ENCODE measurements at regions of chr3 and their contacts with region 1.

Region 1: DNA sequence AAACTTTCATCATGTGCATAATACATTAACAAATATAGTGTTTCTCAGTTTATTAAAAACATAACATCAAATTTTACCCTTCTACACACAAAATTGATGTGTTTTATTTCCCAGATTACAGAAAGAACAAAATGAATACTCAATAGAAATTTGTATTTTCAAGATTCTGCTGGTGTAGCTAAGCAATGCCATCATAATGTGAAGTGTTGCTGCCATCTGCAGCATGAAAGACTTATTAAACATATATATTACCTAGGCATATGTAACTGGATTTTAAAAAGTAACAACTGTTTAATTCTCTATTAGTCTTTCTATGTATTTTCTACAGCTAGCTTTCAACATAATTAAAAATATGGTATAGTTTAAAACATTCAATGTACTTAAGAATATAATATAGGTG is 27.5 kb downstream of the PLSCR5 start:
- DNase-seq: peak; percentile 40
- H3K4me3 ChIP-seq: no peak overlapping the region
- H3K27ac ChIP-seq: no peak overlapping the region
- H3K4me1 ChIP-seq: peaks cover 23% of the 10 kb centered on the region
- H3K27me3 ChIP-seq: no peaks in the 10 kb centered on the region
- CTCF ChIP-seq: peak; percentile 27 to 51

Region 2: DNA sequence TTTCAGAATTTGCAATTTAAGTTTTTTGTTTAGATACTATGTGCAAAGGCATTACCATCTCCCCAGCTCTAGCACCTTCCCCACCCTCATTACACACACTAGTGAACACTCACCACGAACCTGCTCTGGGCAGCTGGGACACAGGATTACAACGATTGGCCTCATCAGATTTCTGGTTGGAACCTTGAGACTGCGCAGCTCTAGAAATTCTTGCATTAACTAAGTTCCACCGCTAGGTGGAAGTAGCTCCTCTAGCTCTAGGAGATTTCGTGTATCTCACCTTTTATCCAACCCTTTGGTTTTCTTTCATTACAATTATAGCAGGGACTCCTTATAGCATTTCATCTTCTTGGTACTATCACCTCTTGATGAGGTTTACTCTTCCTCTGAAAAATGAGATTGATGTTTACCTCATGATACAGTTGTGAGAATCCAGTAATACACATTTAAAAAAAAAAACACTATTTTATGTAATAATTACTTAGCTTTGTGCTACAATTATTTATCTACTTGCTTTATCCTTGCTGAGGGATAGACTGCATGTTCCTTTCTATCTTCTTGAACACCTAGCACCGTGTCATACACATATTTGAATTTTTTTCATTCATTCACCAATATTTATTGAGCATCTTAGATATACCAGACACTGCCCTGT is 388.0 kb before region 1 on chr3:
- CTCF ChIA-PET with region 1: no interaction called
- dilution Hi-C with region 1: no loop called
- in situ Hi-C with region 1: no loop called
- intact Hi-C with region 1: loop called (anchors 1 kb)
- DNase-seq: peak; percentile 54
- H3K4me3 ChIP-seq: no peak overlapping the region
- H3K27ac ChIP-seq: no peak overlapping the region
- H3K4me1 ChIP-seq: peaks cover 3% of the 10 kb centered on the region
- H3K27me3 ChIP-seq: no peaks in the 10 kb centered on the region
- CTCF ChIP-seq: peak; percentile 78 to 80

Region 3: GRCh38 chr3:146326670-146327543 is 250.8 kb before region 1 on chr3:
- CTCF ChIA-PET with region 1: interaction called, 8 read pairs
- dilution Hi-C with region 1: no loop called
- in situ Hi-C with region 1: loop called (anchors 10 kb)
- intact Hi-C with region 1: loop called (anchors 2 kb)
- DNase-seq: peak; percentile 51
- H3K4me3 ChIP-seq: no peak overlapping the region
- H3K27ac ChIP-seq: no peak overlapping the region
- H3K4me1 ChIP-seq: no peaks in the 10 kb centered on the region
- H3K27me3 ChIP-seq: no peaks in the 10 kb centered on the region
- CTCF ChIP-seq: peak; percentile 46 to 58

Region 4: DNA sequence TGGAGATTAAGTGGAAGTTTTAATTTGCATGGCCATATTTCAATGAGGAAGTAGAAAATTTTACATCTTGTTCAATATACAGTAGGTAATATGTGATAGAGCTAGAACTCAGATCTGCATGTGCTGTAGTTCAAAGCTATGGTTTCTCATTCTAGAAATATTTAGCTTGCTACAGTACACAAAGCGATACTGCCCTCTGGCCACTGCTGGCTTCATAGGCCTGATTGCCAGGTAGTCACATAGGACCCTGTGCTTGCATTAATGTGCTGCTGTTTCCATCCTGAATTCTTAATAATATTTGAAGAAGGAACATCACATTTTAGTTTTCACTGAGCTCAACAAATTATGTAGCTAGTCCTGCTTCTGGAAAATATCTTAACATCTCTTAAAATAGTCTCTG is 195.3 kb before region 1 on chr3:
- CTCF ChIA-PET with region 1: no interaction called
- dilution Hi-C with region 1: no loop called
- in situ Hi-C with region 1: no loop called
- intact Hi-C with region 1: loop called (anchors 2 kb)
- DNase-seq: peak; percentile 16
- H3K4me3 ChIP-seq: no peak overlapping the region
- H3K27ac ChIP-seq: no peak overlapping the region
- H3K4me1 ChIP-seq: no peaks in the 10 kb centered on the region
- H3K27me3 ChIP-seq: no peaks in the 10 kb centered on the region
- CTCF ChIP-seq: peak in 1 of 2 donors; percentile 30

Region 5: DNA sequence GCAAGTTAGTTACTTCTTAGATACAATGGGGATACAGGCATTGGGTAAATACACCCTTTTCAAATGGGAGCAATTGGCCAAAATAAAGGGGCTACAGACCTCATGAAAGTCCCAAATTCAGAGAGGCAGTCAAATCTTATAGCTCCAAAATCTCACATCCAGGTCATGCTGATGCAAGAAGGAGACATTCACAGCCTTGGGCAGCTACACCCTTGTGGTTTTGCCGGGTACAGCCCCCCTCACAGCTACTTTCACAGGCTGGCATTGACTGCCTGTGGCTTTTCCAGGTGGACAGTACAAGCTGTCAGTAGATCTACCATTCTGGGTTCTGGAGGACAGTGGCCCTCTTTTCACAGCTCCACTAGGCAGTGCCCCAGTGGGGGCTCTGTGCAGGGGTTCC is 15.8 kb before region 1 on chr3:
- CTCF ChIA-PET with region 1: no interaction called
- dilution Hi-C with region 1: no loop called
- in situ Hi-C with region 1: no loop called
- intact Hi-C with region 1: no loop called
- DNase-seq: peak; percentile 27
- H3K4me3 ChIP-seq: no peak overlapping the region
- H3K27ac ChIP-seq: no peak overlapping the region
- H3K4me1 ChIP-seq: peaks cover 16% of the 10 kb centered on the region
- H3K27me3 ChIP-seq: no peaks in the 10 kb centered on the region
- CTCF ChIP-seq: peak in 1 of 2 donors; percentile 10

Region 6: GRCh38 chr3:146928421-146929059 is 350.9 kb after region 1 on chr3:
- CTCF ChIA-PET with region 1: no interaction called
- dilution Hi-C with region 1: no loop called
- in situ Hi-C with region 1: no loop called
- intact Hi-C with region 1: no loop called
- DNase-seq: no peak
- H3K4me3 ChIP-seq: no peak overlapping the region
- H3K27ac ChIP-seq: no peak overlapping the region
- H3K4me1 ChIP-seq: no peaks in the 10 kb centered on the region
- H3K27me3 ChIP-seq: no peaks in the 10 kb centered on the region
- CTCF ChIP-seq: no peak

Region 7: DNA sequence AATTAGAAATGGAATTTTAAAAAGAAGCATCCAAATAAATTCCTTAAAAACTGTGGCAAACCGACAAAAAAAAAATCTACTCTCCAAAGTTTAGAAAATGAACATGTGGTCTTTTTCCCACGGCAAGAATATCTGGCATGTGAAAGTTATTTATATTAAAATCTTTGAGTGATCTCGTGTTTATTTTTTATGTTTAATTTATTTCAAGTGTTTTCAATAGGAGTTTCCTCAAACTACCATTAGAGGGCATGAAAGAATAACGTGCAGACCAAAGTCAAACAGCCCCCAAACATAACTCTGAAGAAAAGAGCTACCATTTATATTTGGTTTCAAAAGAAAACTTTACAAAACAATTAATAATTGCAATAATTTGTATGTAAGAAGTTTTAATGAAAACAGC is 542.3 kb after region 1 on chr3:
- CTCF ChIA-PET with region 1: no interaction called
- dilution Hi-C with region 1: no loop called
- in situ Hi-C with region 1: no loop called
- intact Hi-C with region 1: no loop called
- DNase-seq: no peak
- H3K4me3 ChIP-seq: no peak overlapping the region
- H3K27ac ChIP-seq: no peak overlapping the region
- H3K4me1 ChIP-seq: no peaks in the 10 kb centered on the region
- H3K27me3 ChIP-seq: peaks cover 4% of the 10 kb centered on the region
- CTCF ChIP-seq: peak; percentile 26 to 53

Measured in mammary epithelial cell (primary cell).